Adrenal gland (tissue), 19 donors: ENCODE measurements at regions of chr3 and their contacts with region 1.

Region 1: GRCh38 chr3:113287803-113288648 is 76.7 kb downstream of the BOC start:
- DNase-seq: peak; percentile 27 to 82 (median 65)
- H3K4me3 ChIP-seq: no peak overlapping the region
- H3K27ac ChIP-seq: no peak overlapping the region
- H3K4me1 ChIP-seq: peaks cover 3 to 11% of the 10 kb centered on the region in 2 donors
- H3K27me3 ChIP-seq: no peaks in the 10 kb centered on the region
- CTCF ChIP-seq: peak; percentile 98 to 100 (median 99)
- POLR2A ChIP-seq: peak in 1 of 2 donors; percentile 14

Region 2: GRCh38 chr3:113051302-113051711 is 236.7 kb before region 1 on chr3:
- intact Hi-C with region 1: loop called (anchors 5 kb)
- DNase-seq: peak; percentile 77 to 97 (median 86)
- H3K4me3 ChIP-seq: peak overlapping the region in 1 of 4 donors; percentile 20
- H3K27ac ChIP-seq: no peak overlapping the region
- H3K4me1 ChIP-seq: peaks cover 0 to 8% of the 10 kb centered on the region in 2 donors
- H3K27me3 ChIP-seq: no peaks in the 10 kb centered on the region
- CTCF ChIP-seq: peak; percentile 90 to 98 (median 96)
- POLR2A ChIP-seq: no peak

Region 3: DNA sequence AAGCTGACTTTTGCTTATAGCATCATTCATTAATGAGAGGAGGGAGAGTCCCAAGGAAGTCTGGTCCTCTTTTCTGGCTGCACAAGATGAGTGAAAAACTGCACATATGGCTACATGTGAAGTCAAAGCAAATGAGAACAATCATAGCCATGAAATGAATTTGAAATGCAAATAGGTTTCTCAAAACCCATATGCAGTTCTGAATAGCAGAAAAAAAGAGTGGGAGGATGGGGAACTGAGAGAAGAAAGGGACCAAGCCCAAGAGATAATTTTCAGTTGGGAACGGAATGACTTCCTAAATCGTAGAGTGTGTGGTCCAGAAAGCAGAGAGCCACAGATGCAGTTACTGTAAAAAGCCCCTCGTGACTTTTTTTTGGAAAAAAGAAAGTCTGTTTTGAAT is 230.9 kb before region 1 on chr3:
- intact Hi-C with region 1: loop called (anchors 5 kb)
- DNase-seq: no peak
- H3K4me3 ChIP-seq: no peak overlapping the region
- H3K27ac ChIP-seq: no peak overlapping the region
- H3K4me1 ChIP-seq: no peaks in the 10 kb centered on the region
- H3K27me3 ChIP-seq: no peaks in the 10 kb centered on the region
- CTCF ChIP-seq: no peak
- POLR2A ChIP-seq: no peak